H1 (cell line): ENCODE measurements at regions of chr13 and their contacts with region 1.

Region 1: DNA sequence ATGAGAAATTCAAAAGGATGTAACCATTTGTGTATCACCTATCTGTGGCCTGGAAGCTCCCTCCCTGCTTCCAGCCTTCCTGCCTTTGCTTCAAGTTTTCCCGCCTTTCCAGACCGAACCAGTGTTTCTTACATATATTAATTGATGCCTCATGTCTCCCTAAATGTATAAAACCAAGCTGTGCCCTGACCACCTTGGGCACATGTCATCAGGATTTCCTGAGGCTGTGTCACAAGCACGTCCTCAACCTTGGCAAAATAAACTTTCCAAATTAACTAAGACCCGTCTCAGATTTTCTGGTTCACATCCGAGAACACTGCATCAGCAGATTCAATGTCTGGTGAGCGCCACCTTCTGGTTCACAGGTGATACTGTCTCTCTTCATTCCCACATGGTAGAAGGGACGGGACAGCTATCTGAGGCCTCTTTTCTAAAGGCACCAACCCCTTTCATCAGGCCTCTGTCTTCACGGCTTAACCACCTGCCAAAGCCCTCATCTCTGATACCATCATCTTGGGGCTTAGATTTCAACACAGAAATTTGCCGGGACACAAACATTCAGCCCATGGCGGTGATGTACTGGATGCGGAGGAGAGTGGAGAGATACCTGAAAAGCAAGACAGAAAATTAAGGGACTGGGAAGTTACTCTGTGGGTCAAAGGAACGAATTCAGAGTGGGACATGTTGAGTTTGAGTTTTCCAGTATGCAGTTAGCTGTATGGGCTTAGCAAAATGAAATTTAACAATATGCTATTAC is 58.7 kb upstream of the PABPC3 start:
- DNase-seq: peak in 1 of 2 experiments; percentile 64
- H3K4me3 ChIP-seq: no peak overlapping the region
- H3K27ac ChIP-seq: no peak overlapping the region
- H3K4me1 ChIP-seq: no peaks in the 10 kb centered on the region
- H3K27me3 ChIP-seq: no peaks in the 10 kb centered on the region
- CTCF ChIP-seq: peak; percentile 64 to 86 (median 83)
- EP300 ChIP-seq: no peak
- POLR2A ChIP-seq: no peak
- RAD21 ChIP-seq: peak; percentile 80 to 82

Region 2: DNA sequence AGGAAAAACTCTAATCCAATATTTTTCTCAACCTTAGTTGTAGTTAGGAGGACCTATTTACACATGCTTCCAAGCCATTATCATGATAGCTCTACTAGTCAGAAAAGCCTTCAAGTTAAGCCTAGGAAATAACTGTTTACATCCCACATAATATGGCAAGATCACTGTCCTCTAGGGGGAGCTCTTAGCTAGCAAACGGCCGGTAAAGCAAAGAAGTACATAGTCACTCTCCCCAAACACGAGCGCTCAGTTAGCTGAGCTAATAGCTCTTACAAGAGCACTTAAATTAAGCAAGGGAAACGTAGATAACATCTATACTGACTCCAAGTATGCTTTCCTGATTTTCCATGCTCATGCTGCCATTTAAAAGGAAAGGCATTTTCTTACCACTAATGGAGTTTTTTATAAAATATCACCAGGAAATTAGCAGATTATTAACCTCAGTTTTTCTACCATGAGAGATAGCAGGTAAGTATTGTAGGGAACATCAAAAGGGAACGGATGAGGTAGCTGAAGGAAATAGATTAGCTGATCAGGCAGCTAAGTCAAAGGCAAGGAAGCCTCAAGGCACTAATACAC is 41.9 kb before region 1 on chr13:
- CTCF ChIA-PET with region 1: interaction called, 11 read pairs
- POLR2A ChIA-PET with region 1: no interaction called
- DNase-seq: peak in 1 of 2 experiments; percentile 55
- H3K4me3 ChIP-seq: no peak overlapping the region
- H3K27ac ChIP-seq: no peak overlapping the region
- H3K4me1 ChIP-seq: no peaks in the 10 kb centered on the region; a peak in 1 of 7 replicates
- H3K27me3 ChIP-seq: no peaks in the 10 kb centered on the region
- CTCF ChIP-seq: peak in 2 of 3 experiments; percentile 79 to 81; a peak in 3 of 4 replicates
- EP300 ChIP-seq: no peak
- POLR2A ChIP-seq: no peak
- RAD21 ChIP-seq: peak; percentile 78 to 85

Region 3: DNA sequence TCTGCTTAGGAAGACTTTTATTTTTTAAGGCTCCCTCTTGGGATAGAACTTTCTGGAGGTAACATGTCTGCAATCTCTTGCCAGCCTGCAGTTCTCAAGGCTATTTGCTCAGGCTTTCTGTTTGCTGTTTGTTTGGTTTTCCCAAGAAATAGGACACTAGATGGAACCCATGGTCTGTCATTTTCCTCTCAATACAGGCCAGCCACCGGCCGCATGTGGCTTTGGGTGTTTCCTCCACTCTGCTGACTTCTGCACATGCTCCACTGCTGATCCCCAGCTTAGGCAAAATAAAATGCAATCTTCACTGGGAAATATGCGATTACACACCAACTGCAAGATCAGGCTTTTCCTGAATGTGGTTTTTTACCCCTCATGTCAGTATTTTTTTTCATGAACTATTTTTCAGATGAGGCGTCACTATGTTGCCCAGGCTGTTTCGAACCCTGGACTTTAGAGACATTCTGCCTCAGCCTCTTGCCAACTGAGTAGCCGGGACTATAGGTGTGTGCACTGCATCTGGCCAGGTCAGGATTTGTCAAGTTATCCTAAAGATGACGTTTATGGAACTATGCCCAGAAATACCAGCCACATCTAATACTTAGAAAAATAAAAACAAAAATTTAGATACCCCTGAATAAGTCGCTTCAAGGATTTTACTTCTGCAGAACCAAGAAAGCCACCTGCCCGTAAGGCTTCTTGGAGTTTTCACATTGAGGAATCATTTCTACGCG is 35.6 kb before region 1 on chr13:
- CTCF ChIA-PET with region 1: interaction called, 18 read pairs
- POLR2A ChIA-PET with region 1: no interaction called
- DNase-seq: no peak
- H3K4me3 ChIP-seq: no peak overlapping the region
- H3K27ac ChIP-seq: no peak overlapping the region
- H3K4me1 ChIP-seq: no peaks in the 10 kb centered on the region; a peak in 1 of 7 replicates
- H3K27me3 ChIP-seq: no peaks in the 10 kb centered on the region
- CTCF ChIP-seq: no peak
- EP300 ChIP-seq: no peak
- POLR2A ChIP-seq: no peak
- RAD21 ChIP-seq: peak in 1 of 2 experiments; percentile 33; a peak in 1 of 4 replicates

Region 4: DNA sequence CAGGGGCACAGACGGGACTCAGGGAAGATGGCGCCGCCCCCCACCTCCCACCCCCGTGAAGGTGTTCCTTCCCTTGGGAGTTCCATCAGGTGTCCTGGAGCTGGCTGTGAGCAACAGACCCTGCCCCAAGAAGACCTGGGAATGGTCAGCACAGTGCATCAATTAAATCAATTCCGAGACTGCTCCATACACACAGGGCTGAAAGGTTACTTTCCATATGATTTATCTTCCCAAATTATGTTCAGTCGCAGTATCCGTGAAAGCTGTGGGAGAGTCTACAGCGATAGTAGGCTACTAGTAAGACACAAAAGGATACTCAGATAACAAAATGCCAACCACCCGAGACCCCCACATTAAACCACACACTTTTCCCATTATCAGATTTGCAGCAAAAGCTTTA is 13.1 kb before region 1 on chr13:
- CTCF ChIA-PET with region 1: interaction called, 14 read pairs
- POLR2A ChIA-PET with region 1: no interaction called
- DNase-seq: no peak
- H3K4me3 ChIP-seq: no peak overlapping the region
- H3K27ac ChIP-seq: no peak overlapping the region
- H3K4me1 ChIP-seq: no peaks in the 10 kb centered on the region
- H3K27me3 ChIP-seq: peaks cover under 1 to 7% (median 4%) of the 10 kb centered on the region in 4 experiments; a peak in 6 of 7 replicates
- CTCF ChIP-seq: no peak
- EP300 ChIP-seq: no peak
- POLR2A ChIP-seq: no peak
- RAD21 ChIP-seq: no peak

Region 5: GRCh38 chr13:25051065-25051464 is 13.8 kb after region 1 on chr13:
- CTCF ChIA-PET with region 1: interaction called, 14 read pairs
- POLR2A ChIA-PET with region 1: interaction called, 3 read pairs
- DNase-seq: no peak
- H3K4me3 ChIP-seq: no peak overlapping the region
- H3K27ac ChIP-seq: no peak overlapping the region
- H3K4me1 ChIP-seq: peaks cover 0 to 2% (median 0%) of the 10 kb centered on the region in 4 experiments; a peak in 3 of 7 replicates
- H3K27me3 ChIP-seq: peaks cover 0 to 10% (median 6%) of the 10 kb centered on the region in 4 experiments; a peak in 4 of 7 replicates
- CTCF ChIP-seq: no peak
- EP300 ChIP-seq: no peak
- POLR2A ChIP-seq: no peak
- RAD21 ChIP-seq: no peak

Region 6: GRCh38 chr13:25153736-25154135 is 116.5 kb after region 1 on chr13:
- CTCF ChIA-PET with region 1: no interaction called
- POLR2A ChIA-PET with region 1: no interaction called
- DNase-seq: no peak
- H3K4me3 ChIP-seq: no peak overlapping the region
- H3K27ac ChIP-seq: no peak overlapping the region
- H3K4me1 ChIP-seq: peaks cover 0 to 16% (median 8%) of the 10 kb centered on the region in 4 experiments; a peak in 6 of 7 replicates
- H3K27me3 ChIP-seq: no peaks in the 10 kb centered on the region; a peak in 2 of 7 replicates
- CTCF ChIP-seq: no peak
- EP300 ChIP-seq: no peak
- POLR2A ChIP-seq: no peak
- RAD21 ChIP-seq: no peak; a peak in 1 of 4 replicates